PC-3 (cell line): ENCODE measurements at regions of chr4 and their contacts with region 1.

Region 1: DNA sequence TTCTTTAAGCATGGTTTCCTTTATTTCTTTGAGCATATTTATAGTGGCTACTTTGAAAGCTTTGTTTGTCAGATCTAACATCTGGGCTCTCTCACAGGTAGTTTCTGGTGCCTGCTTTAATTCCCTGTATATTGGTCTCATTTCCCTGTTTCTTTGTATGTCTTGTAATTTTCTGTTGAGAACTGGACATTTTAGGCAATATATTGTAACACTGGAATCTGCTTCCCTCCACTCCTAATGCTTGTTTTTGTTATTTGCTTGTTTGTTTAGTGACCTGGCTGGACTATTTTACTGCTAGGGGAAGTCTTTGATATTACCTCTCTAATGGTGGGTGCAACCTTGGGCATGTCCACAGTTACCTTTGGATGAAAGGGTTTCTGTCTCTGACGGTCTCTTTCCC is 25.0 kb downstream of the BMPR1B start:
- DNase-seq: no peak
- ATAC-seq: no peak
- H3K4me3 ChIP-seq: no peak overlapping the region
- H3K27ac ChIP-seq: no peak overlapping the region
- H3K4me1 ChIP-seq: no peaks in the 10 kb centered on the region
- H3K27me3 ChIP-seq: no peaks in the 10 kb centered on the region
- CTCF ChIP-seq: no peak

Region 2: GRCh38 chr4:94827481-94828110 is 44.9 kb after region 1 on chr4:
- CTCF ChIA-PET with region 1: no interaction called
- POLR2A ChIA-PET with region 1: no interaction called
- intact Hi-C with region 1: loop called (anchors 5 kb)
- DNase-seq: peak; percentile 84
- ATAC-seq: peak; percentile 98
- H3K4me3 ChIP-seq: peak overlapping the region; percentile 52
- H3K27ac ChIP-seq: peak overlapping the region; percentile 75
- H3K4me1 ChIP-seq: peaks cover 24% of the 10 kb centered on the region
- H3K27me3 ChIP-seq: no peaks in the 10 kb centered on the region
- CTCF ChIP-seq: no peak